Right cardiac atrium (tissue), 5 donors: ENCODE measurements at regions of chr1 and their contacts with region 1.

Region 1: GRCh38 chr1:171576144-171576543 is 45.9 kb upstream of the MYOCOS start:
- DNase-seq: no peak
- ATAC-seq: no peak
- H3K4me3 ChIP-seq: no peak overlapping the region
- H3K27ac ChIP-seq: no peak overlapping the region
- H3K4me1 ChIP-seq: no peaks in the 10 kb centered on the region
- H3K27me3 ChIP-seq: no peaks in the 10 kb centered on the region

Region 2: DNA sequence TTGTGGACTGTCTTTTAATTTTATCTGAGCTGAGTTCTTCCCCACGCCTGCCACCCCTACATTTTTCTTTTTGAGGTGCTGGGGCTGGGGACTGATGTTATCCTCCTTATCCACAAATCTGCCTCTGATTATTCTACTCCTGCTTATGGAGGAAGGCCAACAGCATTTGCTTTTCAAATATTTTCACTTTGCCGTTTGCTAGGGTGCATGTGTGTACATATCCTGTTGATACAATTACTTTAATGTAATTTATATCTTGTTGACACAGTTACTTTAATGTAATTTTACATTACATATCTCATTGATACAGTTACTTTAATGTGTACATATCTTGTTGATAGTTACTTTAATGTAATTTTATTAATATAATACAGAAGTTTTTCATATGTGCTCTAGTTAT is 54.6 kb before region 1 on chr1:
- intact Hi-C with region 1: loop called in 1 of 4 experiments (anchors 10 kb)
- DNase-seq: no peak
- ATAC-seq: no peak
- H3K4me3 ChIP-seq: no peak overlapping the region
- H3K27ac ChIP-seq: no peak overlapping the region
- H3K4me1 ChIP-seq: no peaks in the 10 kb centered on the region
- H3K27me3 ChIP-seq: no peaks in the 10 kb centered on the region